GM12878 (cell line): ENCODE measurements at regions of chr18 and their contacts with region 1.

Region 1: GRCh38 chr18:4358618-4359017 is 96.5 kb downstream of the DLGAP1 start:
- DNase-seq: no peak
- ATAC-seq: no peak
- H3K4me3 ChIP-seq: no peak overlapping the region
- H3K27ac ChIP-seq: no peak overlapping the region
- H3K4me1 ChIP-seq: no peaks in the 10 kb centered on the region
- H3K27me3 ChIP-seq: no peaks in the 10 kb centered on the region
- CTCF ChIP-seq: no peak
- EP300 ChIP-seq: no peak
- POLR2A ChIP-seq: no peak
- RAD21 ChIP-seq: no peak

Region 2: GRCh38 chr18:4207383-4207985 is 151.1 kb before region 1 on chr18:
- CTCF ChIA-PET with region 1: no interaction called
- POLR2A ChIA-PET with region 1: no interaction called
- RAD21 ChIA-PET with region 1: no interaction called
- SMC1A ChIA-PET with region 1: no interaction called
- in situ Hi-C with region 1: no loop called
- intact Hi-C with region 1: no loop called
- DNase-seq: no peak
- ATAC-seq: no peak
- H3K4me3 ChIP-seq: no peak overlapping the region
- H3K27ac ChIP-seq: no peak overlapping the region
- H3K4me1 ChIP-seq: no peaks in the 10 kb centered on the region
- H3K27me3 ChIP-seq: no peaks in the 10 kb centered on the region
- CTCF ChIP-seq: no peak
- EP300 ChIP-seq: no peak
- POLR2A ChIP-seq: no peak
- RAD21 ChIP-seq: no peak

Region 3: GRCh38 chr18:4391859-4392258 is 33.2 kb after region 1 on chr18:
- CTCF ChIA-PET with region 1: interaction called, 3 read pairs
- POLR2A ChIA-PET with region 1: interaction called, 6 read pairs
- RAD21 ChIA-PET with region 1: interaction called, 19 read pairs
- SMC1A ChIA-PET with region 1: interaction called, 21 read pairs
- in situ Hi-C with region 1: no loop called
- intact Hi-C with region 1: loop called (anchors 5 kb)
- DNase-seq: peak; percentile 60
- ATAC-seq: peak; percentile 65
- H3K4me3 ChIP-seq: no peak overlapping the region
- H3K27ac ChIP-seq: 0 out of 2 replicates have a peak overlapping the region, but pooled peaks have one; percentile 20
- H3K4me1 ChIP-seq: no peaks in the 10 kb centered on the region
- H3K27me3 ChIP-seq: no peaks in the 10 kb centered on the region
- CTCF ChIP-seq: no peak
- EP300 ChIP-seq: peak; percentile 96 to 99
- POLR2A ChIP-seq: no peak
- RAD21 ChIP-seq: no peak

Region 4: DNA sequence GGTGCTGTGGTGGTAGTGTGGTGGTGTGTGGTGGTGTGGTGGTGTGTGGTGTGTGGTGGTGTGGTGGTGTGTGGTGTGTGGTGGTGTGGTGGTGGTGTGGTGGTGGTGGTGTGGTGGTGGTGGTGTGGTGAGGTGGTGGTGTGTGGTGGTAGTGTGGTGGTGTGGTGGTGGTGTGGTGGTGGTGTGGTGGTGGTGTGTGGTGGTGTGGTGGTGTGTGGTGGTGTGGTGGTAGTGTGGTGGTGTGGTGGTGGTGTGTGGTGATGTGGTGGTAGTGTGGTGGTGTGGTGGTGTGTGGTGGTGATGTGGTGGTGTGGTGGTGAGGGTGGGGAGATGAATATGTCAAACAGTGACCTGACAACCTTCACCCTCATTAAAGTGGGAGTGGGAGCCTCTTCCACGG is 152.1 kb after region 1 on chr18:
- CTCF ChIA-PET with region 1: no interaction called
- POLR2A ChIA-PET with region 1: no interaction called
- RAD21 ChIA-PET with region 1: no interaction called
- SMC1A ChIA-PET with region 1: no interaction called
- in situ Hi-C with region 1: no loop called
- intact Hi-C with region 1: no loop called
- DNase-seq: no peak
- ATAC-seq: peak; percentile 23; the same call in 2 of the 3 replicates
- H3K4me3 ChIP-seq: no peak overlapping the region
- H3K27ac ChIP-seq: no peak overlapping the region
- H3K4me1 ChIP-seq: no peaks in the 10 kb centered on the region
- H3K27me3 ChIP-seq: no peaks in the 10 kb centered on the region
- CTCF ChIP-seq: no peak
- EP300 ChIP-seq: no peak
- POLR2A ChIP-seq: no peak
- RAD21 ChIP-seq: no peak